ENCODE measurements at regions of chr2 and their contacts with region 1.

Region 1: GRCh38 chr2:225002039-225002655 is 40.1 kb downstream of the DOCK10 start:
- DNase-seq: peak in 3 of 5 donors; percentile 15 to 49 (median 37)
- ATAC-seq: peak in 1 of 4 donors; percentile 46
- H3K4me3 ChIP-seq: no peak overlapping the region
- H3K27ac ChIP-seq: no peak overlapping the region
- H3K4me1 ChIP-seq: peaks cover 0 to 16% (median 0%) of the 10 kb centered on the region in 12 donors
- H3K27me3 ChIP-seq: peaks cover 0 to 3% (median 0%) of the 10 kb centered on the region in 9 donors
- CTCF ChIP-seq: peak; percentile 31 to 72 (median 60)
- POLR2A ChIP-seq: no peak

Region 2: GRCh38 chr2:224793946-224794345 is 208.2 kb before region 1 on chr2:
- intact Hi-C with region 1: loop called in 1 of 10 experiments (anchors 10 kb)
- DNase-seq: peak in 3 of 5 donors; percentile 27 to 32 (median 31)
- ATAC-seq: peak; percentile 42 to 81 (median 78)
- H3K4me3 ChIP-seq: no peak overlapping the region
- H3K27ac ChIP-seq: peak overlapping the region in 1 of 12 donors; percentile 50
- H3K4me1 ChIP-seq: peaks cover 0 to 6% (median 0%) of the 10 kb centered on the region in 12 donors
- H3K27me3 ChIP-seq: no peaks in the 10 kb centered on the region
- CTCF ChIP-seq: no peak
- POLR2A ChIP-seq: no peak

Region 3: DNA sequence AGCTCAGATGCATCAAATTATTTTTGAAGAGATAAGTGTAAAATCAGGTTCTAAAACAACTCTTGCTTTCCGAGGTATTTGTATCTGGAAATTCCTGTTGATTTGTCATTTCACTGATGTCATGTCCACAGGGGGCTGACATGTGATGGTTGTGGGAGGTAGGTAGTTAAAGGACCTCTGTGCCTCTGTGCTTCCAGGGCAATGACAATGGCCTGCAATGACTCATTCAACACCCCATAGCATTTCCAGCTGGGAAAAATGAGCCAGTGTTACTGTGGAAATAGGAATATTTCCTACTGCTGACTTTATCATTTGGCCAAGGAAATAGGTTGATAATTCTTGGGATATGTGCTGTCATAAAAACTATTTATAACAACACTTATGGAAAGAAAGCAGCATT is 199.7 kb before region 1 on chr2:
- intact Hi-C with region 1: loop called in 2 of 10 experiments (anchors 10 kb)
- DNase-seq: no peak
- ATAC-seq: peak in 2 of 4 donors; percentile 45 to 65
- H3K4me3 ChIP-seq: no peak overlapping the region
- H3K27ac ChIP-seq: no peak overlapping the region
- H3K4me1 ChIP-seq: no peaks in the 10 kb centered on the region
- H3K27me3 ChIP-seq: no peaks in the 10 kb centered on the region
- CTCF ChIP-seq: no peak
- POLR2A ChIP-seq: no peak

Region 4: GRCh38 chr2:224850081-224850480 is 152.1 kb before region 1 on chr2:
- intact Hi-C with region 1: loop called in 1 of 10 experiments (anchors 10 kb)
- DNase-seq: no peak
- ATAC-seq: no peak
- H3K4me3 ChIP-seq: no peak overlapping the region
- H3K27ac ChIP-seq: no peak overlapping the region
- H3K4me1 ChIP-seq: peaks cover 0 to 5% (median 0%) of the 10 kb centered on the region in 12 donors
- H3K27me3 ChIP-seq: no peaks in the 10 kb centered on the region
- CTCF ChIP-seq: no peak
- POLR2A ChIP-seq: no peak

Region 5: DNA sequence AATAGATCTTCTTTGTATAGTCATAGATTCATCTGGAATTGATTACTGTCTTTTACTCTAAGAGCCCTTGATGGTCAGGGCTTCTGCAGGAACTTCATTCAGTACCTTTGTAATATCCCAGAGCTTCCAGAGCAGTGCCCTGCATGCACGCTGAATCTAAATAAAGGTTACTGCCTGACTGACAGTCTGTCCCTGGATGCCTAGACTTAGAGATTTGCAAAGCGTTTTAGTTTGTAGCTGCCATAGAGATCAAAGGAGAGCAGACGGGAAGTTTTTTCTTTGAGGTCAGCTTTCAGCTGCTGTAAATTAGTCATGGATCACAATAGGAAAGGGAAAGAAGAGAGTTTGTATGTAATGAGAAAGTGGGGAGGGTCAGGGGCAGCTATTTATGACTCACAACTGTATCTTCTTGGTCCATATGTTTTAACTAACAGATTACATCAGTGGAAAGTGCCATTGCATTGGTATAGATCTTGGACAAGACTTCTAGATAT is 352.2 kb after region 1 on chr2:
- intact Hi-C with region 1: no loop called
- DNase-seq: no peak
- ATAC-seq: no peak
- H3K4me3 ChIP-seq: no peak overlapping the region
- H3K27ac ChIP-seq: no peak overlapping the region
- H3K4me1 ChIP-seq: no peaks in the 10 kb centered on the region
- H3K27me3 ChIP-seq: no peaks in the 10 kb centered on the region
- CTCF ChIP-seq: no peak
- POLR2A ChIP-seq: no peak

Measured in heart left ventricle (tissue), 16 donors.